Adrenal gland (tissue), 19 donors: ENCODE measurements at regions of chr2 and their contacts with region 1.

Region 1: DNA sequence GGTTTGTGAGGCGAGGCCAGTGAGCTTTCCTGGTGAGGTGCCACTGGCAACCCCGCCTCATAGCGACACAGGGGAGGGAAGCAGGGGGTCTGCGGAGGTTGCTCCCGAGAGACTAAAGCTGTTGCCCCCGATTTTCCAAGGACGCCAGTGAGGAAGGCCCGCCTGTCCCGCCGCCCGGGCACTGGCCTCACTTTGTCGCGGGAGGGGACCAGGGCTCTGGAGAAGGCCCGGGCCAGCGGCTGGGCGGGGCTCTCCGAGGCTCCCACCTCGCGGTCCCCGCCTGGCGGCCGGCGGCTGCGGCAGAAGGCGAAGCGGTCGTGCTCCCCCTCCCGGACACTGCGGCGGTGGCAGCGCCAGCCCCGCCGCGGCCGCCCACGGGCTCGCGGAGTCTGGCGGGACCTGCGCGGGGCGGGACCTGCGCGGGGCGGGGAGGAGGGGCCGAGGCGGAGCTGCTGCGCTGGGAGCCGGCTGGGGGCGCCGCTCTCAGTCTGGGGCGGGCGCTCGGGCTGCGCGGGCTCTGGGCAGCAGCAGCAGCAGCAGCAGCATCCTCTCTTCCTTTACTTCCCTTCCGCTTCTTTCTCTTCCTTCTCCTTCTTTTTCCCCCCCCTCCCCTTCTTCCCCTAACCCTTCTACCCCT is at the start of gene MAP2:
- DNase-seq: peak; percentile 79 to 88 (median 84)
- H3K4me3 ChIP-seq: peak within 1 kb of the TSS; percentile 14 to 66 (median 31)
- H3K27ac ChIP-seq: no peak within 1 kb of the TSS
- H3K4me1 ChIP-seq: peaks cover 7 to 17% of the 10 kb centered on the region in 2 donors
- H3K27me3 ChIP-seq: no peaks in the 10 kb centered on the region
- CTCF ChIP-seq: peak; percentile 33 to 99 (median 78)
- POLR2A ChIP-seq: peak; percentile 26 to 28
- total RNA-seq, gene MAP2: 2.4 to 25.5 (median 5.8) TPM

Region 2: DNA sequence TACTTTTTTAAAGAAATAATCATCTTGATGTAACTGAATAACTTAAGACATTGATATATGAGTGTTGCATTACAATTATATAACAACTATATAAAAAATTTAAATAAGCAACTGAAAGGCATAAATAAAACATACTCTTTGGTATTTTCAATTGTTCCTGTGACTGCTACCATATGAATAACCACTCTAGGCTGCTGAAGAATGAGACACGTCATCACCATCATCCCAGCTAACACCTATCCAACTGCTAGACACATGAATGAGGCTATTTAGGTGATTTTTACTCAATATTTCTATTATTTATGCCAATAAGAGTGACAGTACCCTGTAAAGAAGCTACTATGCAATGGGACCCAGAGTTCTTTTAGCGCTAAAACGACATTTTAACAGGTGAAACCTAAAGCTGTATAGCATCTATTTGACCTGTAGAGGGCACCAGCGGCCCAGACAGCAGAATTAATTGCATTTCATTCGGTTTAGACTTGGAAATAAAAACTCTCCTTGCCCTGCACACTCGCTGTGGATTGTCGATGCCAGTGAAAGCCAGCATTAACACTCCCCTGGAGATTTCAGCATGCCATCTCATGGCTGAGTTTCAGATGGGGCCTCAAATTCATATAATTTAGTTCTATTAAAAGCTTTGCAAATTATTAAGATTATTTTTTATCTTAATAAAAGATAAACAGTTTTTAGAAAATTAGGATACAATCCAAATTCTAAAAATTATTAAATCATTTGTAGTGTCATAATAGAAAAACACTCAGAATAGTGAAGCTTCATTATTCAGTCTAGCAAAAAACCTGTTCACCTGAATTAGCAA is 89.3 kb before region 1 on chr2:
- intact Hi-C with region 1: loop called in 1 of 2 experiments (anchors 5 kb)
- DNase-seq: peak; percentile 52 to 85 (median 72)
- H3K4me3 ChIP-seq: no peak overlapping the region
- H3K27ac ChIP-seq: no peak overlapping the region
- H3K4me1 ChIP-seq: peaks cover 0 to 6% of the 10 kb centered on the region in 2 donors
- H3K27me3 ChIP-seq: no peaks in the 10 kb centered on the region
- CTCF ChIP-seq: peak; percentile 71 to 96 (median 87)
- POLR2A ChIP-seq: no peak

Region 3: DNA sequence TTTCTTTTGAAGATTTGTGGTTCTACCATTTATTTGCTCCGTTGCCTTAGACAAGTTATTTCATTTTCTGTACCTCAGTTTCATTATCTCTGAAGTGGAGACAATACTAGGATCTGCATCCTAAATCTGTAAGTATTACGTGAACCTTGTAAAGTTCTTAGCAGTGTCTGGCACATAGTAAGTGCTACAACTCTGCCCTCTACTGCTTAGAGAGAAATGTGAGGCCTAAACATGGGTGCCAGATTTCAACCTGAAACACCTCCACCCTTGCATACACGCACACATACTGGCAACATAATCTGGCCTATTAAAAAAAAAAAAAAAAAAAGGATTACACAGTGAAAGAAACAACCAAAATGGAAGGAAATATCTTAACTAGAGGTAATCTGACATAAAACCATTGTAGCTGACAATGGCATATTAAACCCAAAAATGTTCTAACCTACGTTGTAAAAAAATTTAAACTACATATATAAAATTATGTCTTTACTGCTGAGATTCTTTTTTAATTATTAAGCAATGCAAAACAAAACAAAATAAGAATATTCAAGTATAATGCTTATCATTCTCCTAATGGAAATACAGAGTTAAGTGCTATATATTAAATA is 132.8 kb after region 1 on chr2:
- intact Hi-C with region 1: loop called (anchors 10 kb)
- DNase-seq: peak in 4 of 7 donors; percentile 5 to 52 (median 20)
- H3K4me3 ChIP-seq: no peak overlapping the region
- H3K27ac ChIP-seq: no peak overlapping the region
- H3K4me1 ChIP-seq: no peaks in the 10 kb centered on the region
- H3K27me3 ChIP-seq: no peaks in the 10 kb centered on the region
- CTCF ChIP-seq: peak in 5 of 6 experiments; percentile 11 to 58 (median 46)
- POLR2A ChIP-seq: no peak

Region 4: GRCh38 chr2:209648714-209649113 is 225.0 kb after region 1 on chr2:
- intact Hi-C with region 1: no loop called
- DNase-seq: no peak
- H3K4me3 ChIP-seq: no peak overlapping the region
- H3K27ac ChIP-seq: no peak overlapping the region
- H3K4me1 ChIP-seq: no peaks in the 10 kb centered on the region
- H3K27me3 ChIP-seq: no peaks in the 10 kb centered on the region
- CTCF ChIP-seq: no peak
- POLR2A ChIP-seq: no peak